ENCODE measurements at regions of chr4 and their contacts with region 1.

Region 1: GRCh38 chr4:112327965-112328733 is 31.0 kb downstream of the ALPK1 start:
- DNase-seq: no peak
- ATAC-seq: peak; percentile 47
- H3K4me3 Mint-ChIP-seq: peak overlapping the region; percentile 9
- H3K27ac Mint-ChIP-seq: peak overlapping the region; percentile 8
- H3K4me1 Mint-ChIP-seq: no peaks in the 10 kb centered on the region
- H3K27me3 Mint-ChIP-seq: no peaks in the 10 kb centered on the region
- CTCF ChIP-seq: peak; percentile 19

Region 2: DNA sequence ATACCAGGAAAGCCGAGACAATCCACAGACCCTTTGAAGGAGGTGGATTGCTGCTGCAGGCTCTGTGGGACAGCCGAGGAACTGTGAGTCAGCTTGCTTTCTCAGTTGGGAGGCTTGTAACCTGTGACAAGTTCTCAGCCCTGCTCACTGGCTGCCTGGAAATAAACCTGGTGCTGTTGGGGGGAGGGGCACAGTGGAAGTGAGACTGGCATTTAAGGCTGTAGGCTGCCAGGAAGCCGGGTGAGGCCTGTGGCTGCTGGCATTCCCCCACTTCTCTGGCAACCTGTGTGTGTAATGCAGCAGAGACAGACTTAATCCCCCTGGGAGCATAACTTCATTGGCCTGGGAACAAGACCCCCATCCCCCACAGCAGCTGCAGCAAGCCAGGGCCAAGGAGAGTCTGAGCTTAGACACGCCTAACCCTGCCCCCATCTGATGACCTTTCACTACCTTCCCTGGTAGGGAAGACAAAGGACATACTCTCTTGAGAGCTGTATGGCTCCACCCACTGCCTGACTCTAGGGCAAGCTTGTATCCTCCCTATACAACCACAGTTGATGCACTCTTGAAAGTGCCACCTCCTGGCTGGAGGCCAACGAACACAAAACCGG is 33.1 kb after region 1 on chr4:
- CTCF ChIA-PET with region 1: interaction called, 4 read pairs
- POLR2A ChIA-PET with region 1: no interaction called
- intact Hi-C with region 1: loop called (anchors 1 kb)
- DNase-seq: peak; percentile 32
- ATAC-seq: peak; percentile 91
- H3K4me3 Mint-ChIP-seq: peak overlapping the region; percentile 20
- H3K27ac Mint-ChIP-seq: peak overlapping the region; percentile 65
- H3K4me1 Mint-ChIP-seq: peaks cover 20% of the 10 kb centered on the region
- H3K27me3 Mint-ChIP-seq: no peaks in the 10 kb centered on the region
- CTCF ChIP-seq: no peak

Region 3: DNA sequence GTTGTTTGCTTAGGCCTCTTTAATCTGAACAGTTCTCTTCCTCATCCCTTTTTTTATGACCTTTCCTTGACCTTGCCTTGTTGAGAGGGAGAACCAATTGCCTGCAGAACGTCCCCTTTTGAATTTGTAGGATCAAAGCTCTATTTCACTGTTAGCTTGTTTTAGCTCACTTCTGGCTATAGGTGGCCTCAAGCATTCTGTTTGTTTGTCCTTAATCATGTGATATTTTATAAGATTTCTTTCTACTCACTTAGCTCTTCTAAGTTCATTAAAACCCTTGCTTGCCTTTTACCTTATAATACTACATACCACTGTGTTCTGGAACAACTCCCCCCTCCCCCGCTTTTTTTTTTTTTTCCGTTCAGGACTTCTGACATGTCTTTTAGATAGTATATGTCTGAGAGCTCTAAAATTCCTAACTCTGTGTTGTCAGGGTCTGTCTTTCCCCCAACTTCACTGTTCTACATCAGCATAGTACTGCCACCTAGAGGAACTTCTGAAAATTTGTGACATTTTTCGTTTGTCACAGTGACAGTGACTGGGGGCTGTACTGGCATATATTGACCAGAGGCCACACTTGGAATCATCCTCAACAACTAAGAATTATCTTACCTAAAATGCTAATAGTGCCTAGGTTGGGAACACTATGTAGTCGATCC is 437.3 kb after region 1 on chr4:
- CTCF ChIA-PET with region 1: interaction called, 6 read pairs
- POLR2A ChIA-PET with region 1: no interaction called
- intact Hi-C with region 1: loop called (anchors 1 kb)
- DNase-seq: no peak
- ATAC-seq: peak; percentile 54
- H3K4me3 Mint-ChIP-seq: no peak overlapping the region
- H3K27ac Mint-ChIP-seq: no peak overlapping the region
- H3K4me1 Mint-ChIP-seq: peaks cover 3% of the 10 kb centered on the region
- H3K27me3 Mint-ChIP-seq: peaks cover 4% of the 10 kb centered on the region
- CTCF ChIP-seq: no peak

Region 4: DNA sequence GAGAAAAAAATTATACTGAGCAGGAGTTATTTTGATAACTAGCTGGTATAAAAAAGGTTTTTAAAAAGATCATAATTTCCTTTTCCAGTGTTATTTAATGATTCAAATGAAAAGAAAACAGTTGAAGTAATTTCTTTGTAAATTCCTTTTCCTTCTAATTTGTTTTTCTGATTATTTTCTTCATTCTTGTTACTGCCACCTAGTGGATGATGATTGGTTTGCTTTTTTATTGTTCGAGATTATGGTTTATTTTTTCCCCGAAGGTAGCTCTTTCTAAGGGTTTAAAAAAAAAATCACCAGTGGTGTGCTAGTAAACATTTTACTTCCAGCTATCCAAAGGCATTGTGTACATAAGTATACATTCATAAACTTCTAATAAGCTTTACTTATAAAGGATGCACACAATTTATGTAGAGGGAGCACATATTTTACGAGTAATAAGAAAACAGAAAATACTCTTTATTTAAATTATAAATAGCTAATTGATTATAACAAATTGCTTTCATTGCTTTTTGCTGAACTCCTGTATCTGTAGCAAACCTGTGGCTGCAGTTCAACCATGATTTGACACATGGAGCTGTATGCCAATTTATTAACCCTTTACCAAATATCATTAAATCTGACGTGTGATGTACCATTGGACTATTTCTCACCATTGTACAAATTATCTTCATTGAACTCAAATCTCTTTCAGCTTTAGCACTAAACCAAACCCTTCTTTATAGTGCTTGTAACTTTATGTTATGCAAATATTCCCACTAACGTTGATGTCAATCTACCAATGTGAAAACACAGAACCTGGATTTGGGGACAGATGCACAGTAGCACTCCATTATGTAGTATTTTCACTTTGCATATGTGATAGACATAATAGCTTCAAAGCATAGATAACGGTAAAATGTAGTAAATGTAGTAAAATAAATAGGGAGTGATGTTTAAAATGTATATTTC is 623.5 kb after region 1 on chr4:
- CTCF ChIA-PET with region 1: no interaction called
- POLR2A ChIA-PET with region 1: no interaction called
- intact Hi-C with region 1: loop called (anchors 5 kb)
- DNase-seq: no peak
- ATAC-seq: no peak
- H3K4me3 Mint-ChIP-seq: no peak overlapping the region
- H3K27ac Mint-ChIP-seq: no peak overlapping the region
- H3K4me1 Mint-ChIP-seq: peaks cover 2% of the 10 kb centered on the region
- H3K27me3 Mint-ChIP-seq: peaks cover 3% of the 10 kb centered on the region
- CTCF ChIP-seq: no peak

Measured in activated B cell treated with CpG ODN at 0.5 μM for 24 hours (primary cell).